ENCODE measurements at regions of chr1 and their contacts with region 1.

Region 1: GRCh38 chr1:151728151-151729054 is 7.1 kb downstream of the RIIAD1 start:
- DNase-seq: no peak
- ATAC-seq: no peak
- H3K4me3 ChIP-seq: no peak overlapping the region
- H3K27ac ChIP-seq: no peak overlapping the region
- H3K4me1 ChIP-seq: peaks cover 8 to 12% of the 10 kb centered on the region in 2 donors
- H3K27me3 ChIP-seq: no peaks in the 10 kb centered on the region
- CTCF ChIP-seq: no peak
- POLR2A ChIP-seq: no peak

Region 2: GRCh38 chr1:151594143-151594625 is 134.2 kb before region 1 on chr1:
- in situ Hi-C with region 1: loop called in 3 of 4 experiments (anchors 5 kb)
- intact Hi-C with region 1: no loop called
- DNase-seq: peak; percentile 50 to 70
- ATAC-seq: peak; percentile 65 to 81
- H3K4me3 ChIP-seq: no peak overlapping the region
- H3K27ac ChIP-seq: no peak overlapping the region
- H3K4me1 ChIP-seq: peaks cover 0 to 7% of the 10 kb centered on the region in 2 donors
- H3K27me3 ChIP-seq: no peaks in the 10 kb centered on the region
- CTCF ChIP-seq: peak; percentile 82 to 96 (median 84)
- POLR2A ChIP-seq: no peak

Measured in gastrocnemius medialis (tissue), 4 donors.